Natural killer cell (primary cell): ENCODE measurements at regions of chr18 and their contacts with region 1.

Region 1: DNA sequence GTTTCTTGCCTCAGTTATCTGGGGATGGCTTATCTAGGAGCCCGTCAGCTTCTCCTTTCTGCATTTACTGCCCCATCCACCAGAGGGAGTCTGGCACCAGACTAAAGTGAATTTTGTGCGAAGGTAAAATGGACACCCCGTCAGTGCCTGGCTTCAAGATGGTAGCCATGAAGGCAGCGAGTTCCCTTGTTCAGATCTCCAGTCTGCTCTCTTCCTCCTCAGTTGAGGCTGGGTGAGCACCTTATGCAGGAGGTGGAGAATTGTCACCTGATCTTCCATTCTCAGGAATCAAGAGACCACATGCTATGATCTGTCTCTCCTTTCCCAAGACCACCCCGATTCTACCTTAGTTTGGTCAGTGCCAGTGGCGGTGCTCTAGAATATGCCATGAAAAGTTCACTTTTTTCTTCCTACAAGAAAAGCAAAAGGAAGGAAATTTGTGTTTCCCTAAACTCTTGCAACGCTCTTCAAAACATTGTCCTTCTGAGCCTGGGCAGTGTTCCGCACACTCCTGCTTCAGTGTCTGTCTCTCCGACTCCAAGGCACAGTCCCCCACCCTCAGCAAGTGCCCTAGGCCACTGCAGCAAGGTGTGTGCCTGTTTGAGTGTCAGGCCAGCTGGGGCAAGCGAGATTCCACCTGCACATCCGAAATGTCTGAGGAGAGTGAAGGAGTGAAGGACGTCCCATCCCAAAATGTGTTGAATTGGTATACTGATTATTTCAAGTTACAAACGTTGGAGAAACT is 168.6 kb downstream of the SS18 start:
- DNase-seq: peak in 1 of 2 donors; percentile 62
- ATAC-seq: peak; percentile 44 to 57 (median 50)
- H3K4me3 ChIP-seq: no peak overlapping the region
- H3K4me3 Mint-ChIP-seq: no peak overlapping the region
- H3K27ac ChIP-seq: no peak overlapping the region
- H3K27ac Mint-ChIP-seq: no peak overlapping the region
- H3K4me1 ChIP-seq: no peaks in the 10 kb centered on the region
- H3K4me1 Mint-ChIP-seq: no peaks in the 10 kb centered on the region
- H3K27me3 ChIP-seq: no peaks in the 10 kb centered on the region
- H3K27me3 Mint-ChIP-seq: peaks cover 0 to 3% of the 10 kb centered on the region in 2 donors
- CTCF ChIP-seq: peak; percentile 49

Region 2: GRCh38 chr18:26335571-26336487 is 414.0 kb after region 1 on chr18:
- intact Hi-C with region 1: loop called (anchors 5 kb)
- DNase-seq: no peak
- ATAC-seq: no peak
- H3K4me3 ChIP-seq: no peak overlapping the region
- H3K4me3 Mint-ChIP-seq: no peak overlapping the region
- H3K27ac ChIP-seq: no peak overlapping the region
- H3K27ac Mint-ChIP-seq: no peak overlapping the region
- H3K4me1 ChIP-seq: no peaks in the 10 kb centered on the region
- H3K4me1 Mint-ChIP-seq: no peaks in the 10 kb centered on the region
- H3K27me3 ChIP-seq: no peaks in the 10 kb centered on the region
- H3K27me3 Mint-ChIP-seq: no peaks in the 10 kb centered on the region
- CTCF ChIP-seq: no peak